ENCODE measurements at regions of chr9 and their contacts with region 1.

Region 1: DNA sequence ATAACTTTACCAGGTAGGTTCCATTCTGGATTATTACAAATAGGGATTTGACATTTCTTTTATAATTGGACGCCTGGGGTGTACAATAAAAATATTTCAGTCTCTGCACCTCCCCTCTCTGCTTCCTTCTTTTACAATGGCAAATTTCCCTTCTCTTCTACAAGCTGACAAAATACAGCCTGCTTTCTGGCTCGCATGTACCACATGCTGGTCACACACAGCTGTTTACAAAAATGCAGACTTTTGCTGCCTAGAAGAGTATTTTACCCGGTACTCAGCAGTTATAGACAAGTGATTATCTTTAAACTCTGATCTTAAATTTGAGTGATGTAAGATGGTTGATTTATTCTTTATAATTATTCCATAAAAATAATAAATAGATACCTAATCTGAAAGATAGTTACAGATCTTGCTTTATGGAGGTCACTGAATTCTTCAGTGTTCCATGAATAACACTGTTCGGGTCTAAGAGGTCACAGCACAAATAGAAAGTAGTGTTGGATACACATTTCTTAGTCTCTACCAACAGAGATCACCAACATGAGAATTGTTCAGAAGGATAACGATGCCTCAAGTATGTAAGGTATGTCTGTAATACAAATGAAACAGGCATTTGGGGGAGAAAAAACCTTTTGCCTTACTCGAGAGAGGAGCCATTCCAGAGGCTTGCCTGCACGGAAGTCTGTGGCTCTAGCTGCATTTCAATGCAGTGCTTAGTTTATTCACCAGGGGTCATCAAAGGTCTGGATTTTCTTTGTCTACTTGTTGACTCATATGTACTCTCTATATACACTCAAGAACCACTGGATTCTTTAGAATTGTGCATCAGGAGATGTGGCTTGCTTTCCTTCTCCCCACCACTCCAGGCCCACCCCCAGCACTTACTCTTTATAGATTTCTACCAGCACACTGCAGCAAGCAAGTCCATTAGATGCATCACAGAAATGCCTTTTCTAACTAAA is 206.6 kb upstream of the RFX3 start:
- DNase-seq: peak; percentile 91
- ATAC-seq: peak; percentile 89
- H3K4me3 ChIP-seq: no peak overlapping the region
- H3K27ac ChIP-seq: peak overlapping the region; percentile 90
- H3K4me1 ChIP-seq: peaks cover 29% of the 10 kb centered on the region
- H3K27me3 ChIP-seq: no peaks in the 10 kb centered on the region
- CTCF ChIP-seq: peak; percentile 76

Region 2: GRCh38 chr9:3525836-3526164 is 206.6 kb before region 1 on chr9 and contains the start of gene RFX3:
- CTCF ChIA-PET with region 1: no interaction called
- POLR2A ChIA-PET with region 1: no interaction called
- intact Hi-C with region 1: loop called (anchors 10 kb)
- DNase-seq: peak; percentile 79
- ATAC-seq: peak; percentile 66
- H3K4me3 ChIP-seq: peak within 1 kb of the TSS; percentile 82
- H3K27ac ChIP-seq: peak within 1 kb of the TSS; percentile 100
- H3K4me1 ChIP-seq: peaks cover 11% of the 10 kb centered on the region; the same call in 1 of the 2 replicates
- H3K27me3 ChIP-seq: no peaks in the 10 kb centered on the region
- CTCF ChIP-seq: no peak
- total RNA-seq, gene RFX3: 2.3 and 4.5 TPM in 2 replicates

Region 3: DNA sequence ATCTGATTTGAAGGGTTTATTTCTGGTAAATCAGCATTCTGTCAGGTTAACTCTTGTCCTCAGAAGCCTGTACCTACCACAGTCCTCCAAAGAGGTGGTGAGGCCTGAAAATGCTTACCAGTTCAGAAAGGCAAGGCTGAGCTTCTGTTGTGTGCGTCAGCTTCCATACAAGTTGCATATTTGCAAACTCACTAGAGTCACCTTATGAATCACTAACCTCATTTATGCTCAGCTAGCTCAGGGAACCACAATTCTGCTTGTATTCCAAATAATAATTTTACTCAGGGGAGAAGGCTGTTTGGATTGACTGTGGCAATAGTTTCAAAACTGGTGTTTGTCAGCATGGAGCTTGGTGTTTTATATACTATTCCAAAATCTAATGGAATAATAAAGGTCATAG is 148.5 kb after region 1 on chr9:
- CTCF ChIA-PET with region 1: no interaction called
- POLR2A ChIA-PET with region 1: no interaction called
- intact Hi-C with region 1: no loop called
- DNase-seq: peak; percentile 87
- ATAC-seq: peak; percentile 85
- H3K4me3 ChIP-seq: no peak overlapping the region
- H3K27ac ChIP-seq: peak overlapping the region; percentile 96
- H3K4me1 ChIP-seq: peaks cover 35% of the 10 kb centered on the region
- H3K27me3 ChIP-seq: no peaks in the 10 kb centered on the region
- CTCF ChIP-seq: no peak

Region 4: GRCh38 chr9:3962971-3963642 is 230.7 kb after region 1 on chr9:
- CTCF ChIA-PET with region 1: no interaction called
- POLR2A ChIA-PET with region 1: no interaction called
- intact Hi-C with region 1: loop called (anchors 10 kb)
- DNase-seq: peak; percentile 90
- ATAC-seq: peak; percentile 88
- H3K4me3 ChIP-seq: peak overlapping the region; percentile 23; the same call in 1 of the 2 replicates
- H3K27ac ChIP-seq: peak overlapping the region; percentile 97
- H3K4me1 ChIP-seq: peaks cover 39% of the 10 kb centered on the region
- H3K27me3 ChIP-seq: no peaks in the 10 kb centered on the region
- CTCF ChIP-seq: no peak

Region 5: GRCh38 chr9:4228606-4229005 is 496.2 kb after region 1 on chr9:
- CTCF ChIA-PET with region 1: no interaction called
- POLR2A ChIA-PET with region 1: no interaction called
- intact Hi-C with region 1: loop called (anchors 1 kb)
- DNase-seq: peak; percentile 51
- ATAC-seq: peak; percentile 74
- H3K4me3 ChIP-seq: no peak overlapping the region
- H3K27ac ChIP-seq: peak overlapping the region; percentile 11; the same call in 1 of the 2 replicates
- H3K4me1 ChIP-seq: peaks cover 35% of the 10 kb centered on the region
- H3K27me3 ChIP-seq: no peaks in the 10 kb centered on the region
- CTCF ChIP-seq: peak; percentile 71

Region 6: DNA sequence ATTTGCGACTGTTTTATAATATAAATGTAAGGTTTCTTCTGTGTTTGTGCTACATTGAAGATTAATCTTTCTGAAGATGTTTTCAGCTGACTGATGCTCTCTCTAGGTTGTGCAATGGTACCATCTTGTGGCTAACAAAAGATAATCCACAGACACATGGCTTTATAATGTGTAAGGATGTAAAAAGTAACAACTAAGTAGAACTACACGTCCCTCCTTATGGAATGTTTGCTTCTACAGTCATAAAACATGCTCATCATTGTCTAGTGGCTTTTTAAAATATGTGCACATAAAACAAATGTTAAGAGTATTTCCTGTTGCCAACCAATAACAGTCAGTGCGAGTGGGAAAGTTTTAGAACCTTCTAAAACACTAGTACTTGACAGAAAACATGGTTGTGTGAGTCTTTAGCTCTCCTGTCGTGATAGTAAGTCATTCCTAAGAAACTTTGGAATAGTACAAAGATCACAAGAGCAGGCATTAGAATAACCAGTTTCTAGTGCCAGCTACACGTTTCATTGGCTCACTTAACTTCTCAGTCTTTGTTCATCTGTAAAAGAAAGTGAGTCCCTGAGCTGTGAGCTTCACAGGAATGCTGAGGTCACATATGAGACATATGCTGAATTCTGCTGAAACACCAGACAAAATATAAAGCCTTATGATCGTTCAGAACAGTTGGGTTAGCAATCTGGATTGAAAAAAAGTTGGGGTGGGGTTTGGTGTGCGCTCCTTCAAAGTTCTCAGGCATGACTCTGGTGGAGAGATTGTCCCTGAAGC is 643.3 kb after region 1 on chr9:
- CTCF ChIA-PET with region 1: interaction called, 3 read pairs
- POLR2A ChIA-PET with region 1: no interaction called
- intact Hi-C with region 1: loop called (anchors 2 kb)
- DNase-seq: peak; percentile 69
- ATAC-seq: peak; percentile 84
- H3K4me3 ChIP-seq: no peak overlapping the region
- H3K27ac ChIP-seq: peak overlapping the region; percentile 58
- H3K4me1 ChIP-seq: peaks cover 17% of the 10 kb centered on the region; the same call in 1 of the 2 replicates
- H3K27me3 ChIP-seq: no peaks in the 10 kb centered on the region
- CTCF ChIP-seq: peak; percentile 73

Measured in PC-3 (cell line).